Right cardiac atrium (tissue), 5 donors: ENCODE measurements at regions of chr13 and their contacts with region 1.

Region 1: DNA sequence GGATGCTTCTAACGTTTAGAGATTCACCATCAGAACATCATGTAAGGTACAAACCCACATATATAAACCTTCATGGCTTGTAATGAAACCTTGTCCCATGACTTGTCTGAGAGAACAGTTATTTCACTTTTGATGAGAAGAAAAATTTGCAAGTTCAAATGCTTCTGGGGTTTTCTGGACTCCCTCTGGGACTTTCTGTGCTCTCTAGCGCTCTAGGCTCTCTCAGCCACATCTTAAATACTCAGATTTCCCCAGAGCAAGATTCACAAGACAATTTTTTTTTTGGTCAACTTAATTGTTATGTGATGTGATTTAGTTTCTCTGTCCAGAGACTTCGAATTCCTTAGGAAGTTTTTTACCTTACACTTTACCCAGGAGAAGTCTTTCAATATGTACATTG is 282.8 kb upstream of the EDNRB start:
- DNase-seq: no peak
- ATAC-seq: no peak
- H3K4me3 ChIP-seq: no peak overlapping the region
- H3K27ac ChIP-seq: no peak overlapping the region
- H3K4me1 ChIP-seq: no peaks in the 10 kb centered on the region
- H3K27me3 ChIP-seq: no peaks in the 10 kb centered on the region

Region 2: DNA sequence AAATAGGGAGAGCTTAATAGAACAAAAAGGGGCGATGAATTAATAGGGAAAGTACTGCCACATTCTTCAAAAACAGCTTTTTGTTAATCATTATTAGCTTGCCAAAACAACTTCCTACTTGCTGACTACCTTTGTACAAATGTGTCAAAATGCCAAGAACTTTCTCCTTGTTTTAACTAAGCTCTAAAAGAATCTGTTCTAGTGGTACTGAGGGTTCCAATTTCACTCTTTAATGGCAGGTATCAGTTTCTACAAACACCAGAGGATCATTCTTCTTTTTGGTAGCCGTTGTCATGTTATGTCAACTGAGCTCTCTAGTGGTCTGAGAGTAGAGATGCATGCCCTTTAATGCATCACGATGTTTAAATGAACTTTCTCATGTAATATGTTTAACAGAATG is 1145.0 kb before region 1 on chr13:
- intact Hi-C with region 1: no loop called
- DNase-seq: no peak
- ATAC-seq: no peak
- H3K4me3 ChIP-seq: no peak overlapping the region
- H3K27ac ChIP-seq: no peak overlapping the region
- H3K4me1 ChIP-seq: no peaks in the 10 kb centered on the region
- H3K27me3 ChIP-seq: no peaks in the 10 kb centered on the region

Region 3: DNA sequence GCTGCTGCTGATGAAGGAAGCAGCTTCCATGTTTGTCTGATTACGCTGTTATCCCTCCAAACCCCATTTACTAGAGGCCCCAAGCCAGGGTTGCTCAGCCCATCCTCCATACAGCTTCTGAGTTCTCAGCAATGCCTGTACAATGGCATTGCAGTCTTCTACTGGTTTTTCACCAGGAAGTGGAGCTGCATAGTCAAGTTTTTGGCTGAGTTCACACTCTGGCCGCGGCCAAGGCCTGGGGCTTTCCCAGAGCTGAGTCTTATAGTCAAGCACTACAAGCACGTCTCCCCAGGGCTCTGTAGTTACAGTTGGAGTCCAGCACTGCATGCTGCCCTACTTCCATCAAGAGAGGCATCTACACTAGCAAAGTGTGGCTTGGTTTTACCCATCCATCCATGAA is 219.4 kb after region 1 on chr13:
- intact Hi-C with region 1: loop called in 1 of 4 experiments (anchors 5 kb)
- DNase-seq: peak; percentile 48 to 83 (median 77)
- ATAC-seq: peak; percentile 65 to 91
- H3K4me3 ChIP-seq: no peak overlapping the region
- H3K27ac ChIP-seq: no peak overlapping the region
- H3K4me1 ChIP-seq: no peaks in the 10 kb centered on the region
- H3K27me3 ChIP-seq: no peaks in the 10 kb centered on the region